ENCODE measurements at regions of chr2 and their contacts with region 1.

Region 1: DNA sequence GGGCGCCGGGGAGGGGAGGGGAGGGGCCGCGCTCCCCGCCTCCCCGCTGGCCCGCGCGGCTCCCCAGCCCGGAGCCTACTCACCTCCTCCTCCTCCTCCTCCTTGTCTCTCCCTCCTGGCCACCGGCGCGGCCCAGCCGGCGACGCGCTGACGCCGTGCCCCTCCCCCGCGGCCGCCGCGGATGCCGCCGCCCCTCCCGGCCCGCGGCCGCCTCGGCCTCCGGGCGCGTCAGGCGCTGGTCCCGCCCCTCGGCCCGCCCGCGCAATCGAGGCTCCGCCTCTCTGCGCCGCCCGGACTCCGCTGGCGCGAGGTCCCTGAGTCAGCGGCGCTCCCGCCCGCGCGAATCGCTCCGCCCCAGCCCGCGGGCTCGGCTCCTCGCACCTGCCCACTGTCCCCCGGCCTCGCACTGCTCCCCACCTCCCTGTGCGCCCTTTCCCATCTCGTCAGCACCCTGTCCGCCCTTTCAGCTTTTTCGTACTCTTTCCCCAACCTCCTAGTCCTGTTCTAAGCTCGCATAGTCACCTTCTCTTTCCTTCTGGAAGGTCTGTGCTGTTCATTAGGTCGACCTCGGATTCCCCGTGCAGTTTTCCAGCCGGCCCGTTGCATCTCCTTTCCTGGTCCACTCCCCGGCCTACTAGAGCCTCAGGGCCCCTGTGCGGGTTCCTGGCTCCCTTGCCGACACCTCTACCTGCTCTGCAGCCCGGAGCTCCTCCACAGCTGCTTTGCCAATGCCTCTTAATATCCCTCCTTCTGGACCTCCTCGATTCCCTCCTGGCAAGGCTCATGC is 187.4 kb downstream of the ZEB2 start:
- DNase-seq: peak; percentile 63 to 84
- ATAC-seq: peak; percentile 90 to 93
- H3K4me3 ChIP-seq: peak overlapping the region; percentile 76 to 98 (median 82)
- H3K27ac ChIP-seq: peak overlapping the region; percentile 83 to 94 (median 89)
- H3K4me1 ChIP-seq: peaks cover 12 to 17% of the 10 kb centered on the region in 2 donors
- H3K27me3 ChIP-seq: no peaks in the 10 kb centered on the region
- CTCF ChIP-seq: no peak
- POLR2A ChIP-seq: peak; percentile 52 to 66

Region 2: GRCh38 chr2:144267239-144267638 is 65.3 kb before region 1 on chr2:
- in situ Hi-C with region 1: no loop called
- intact Hi-C with region 1: no loop called
- DNase-seq: no peak
- ATAC-seq: no peak
- H3K4me3 ChIP-seq: no peak overlapping the region
- H3K27ac ChIP-seq: no peak overlapping the region
- H3K4me1 ChIP-seq: no peaks in the 10 kb centered on the region
- H3K27me3 ChIP-seq: no peaks in the 10 kb centered on the region
- CTCF ChIP-seq: no peak
- POLR2A ChIP-seq: no peak

Region 3: GRCh38 chr2:144364944-144365738 is 32.6 kb after region 1 on chr2:
- in situ Hi-C with region 1: no loop called
- intact Hi-C with region 1: no loop called
- DNase-seq: no peak
- ATAC-seq: no peak
- H3K4me3 ChIP-seq: no peak overlapping the region
- H3K27ac ChIP-seq: no peak overlapping the region
- H3K4me1 ChIP-seq: no peaks in the 10 kb centered on the region
- H3K27me3 ChIP-seq: no peaks in the 10 kb centered on the region
- CTCF ChIP-seq: no peak
- POLR2A ChIP-seq: no peak

Region 4: GRCh38 chr2:144390424-144391020 is 58.0 kb after region 1 on chr2:
- in situ Hi-C with region 1: loop called in 1 of 4 experiments (anchors 10 kb)
- intact Hi-C with region 1: no loop called
- DNase-seq: no peak
- ATAC-seq: no peak
- H3K4me3 ChIP-seq: no peak overlapping the region
- H3K27ac ChIP-seq: no peak overlapping the region
- H3K4me1 ChIP-seq: peaks cover 10 to 14% of the 10 kb centered on the region in 2 donors
- H3K27me3 ChIP-seq: no peaks in the 10 kb centered on the region
- CTCF ChIP-seq: no peak
- POLR2A ChIP-seq: no peak

Region 5: DNA sequence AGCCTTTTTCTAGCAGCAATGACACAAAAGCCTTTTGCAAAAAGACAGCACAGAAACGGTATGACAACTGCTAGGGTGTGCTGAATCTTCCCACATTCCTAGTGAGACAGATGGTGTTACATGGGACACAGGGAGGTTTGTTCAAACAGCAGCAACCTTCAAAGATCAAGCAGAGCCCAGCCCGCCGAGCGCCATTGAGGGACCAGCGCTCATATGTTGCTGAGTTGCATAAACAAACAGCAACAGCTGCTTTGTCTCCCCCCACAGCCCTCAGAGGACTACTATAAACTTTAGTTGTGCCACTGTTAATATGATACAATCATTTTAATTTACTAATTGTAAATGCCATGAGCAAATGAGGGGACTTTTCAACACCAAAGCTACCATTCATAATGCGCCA is 69.7 kb after region 1 on chr2:
- in situ Hi-C with region 1: loop called in 1 of 4 experiments (anchors 10 kb)
- intact Hi-C with region 1: loop called (anchors 5 kb)
- DNase-seq: no peak
- ATAC-seq: no peak
- H3K4me3 ChIP-seq: no peak overlapping the region
- H3K27ac ChIP-seq: peak overlapping the region in 1 of 4 donors; percentile 31
- H3K4me1 ChIP-seq: peaks cover 8 to 9% of the 10 kb centered on the region in 2 donors
- H3K27me3 ChIP-seq: no peaks in the 10 kb centered on the region
- CTCF ChIP-seq: no peak
- POLR2A ChIP-seq: no peak

Region 6: GRCh38 chr2:144456680-144457079 is 124.1 kb after region 1 on chr2:
- in situ Hi-C with region 1: no loop called
- intact Hi-C with region 1: loop called (anchors 5 kb)
- DNase-seq: peak; percentile 44 to 63
- ATAC-seq: peak; percentile 98 to 99
- H3K4me3 ChIP-seq: no peak overlapping the region
- H3K27ac ChIP-seq: no peak overlapping the region
- H3K4me1 ChIP-seq: peaks cover 25 to 40% of the 10 kb centered on the region in 2 donors
- H3K27me3 ChIP-seq: no peaks in the 10 kb centered on the region
- CTCF ChIP-seq: no peak
- POLR2A ChIP-seq: no peak

Region 7: GRCh38 chr2:144516981-144517865 is 184.7 kb after region 1 on chr2:
- in situ Hi-C with region 1: loop called in 3 of 4 experiments (anchors 5 to 25 kb)
- intact Hi-C with region 1: loop called (anchors 2 kb)
- DNase-seq: peak; percentile 65 to 68
- ATAC-seq: peak; percentile 64 to 76
- H3K4me3 ChIP-seq: peak overlapping the region; percentile 76 to 89 (median 78)
- H3K27ac ChIP-seq: peak overlapping the region; percentile 94 to 96 (median 95)
- H3K4me1 ChIP-seq: peaks cover 34 to 44% of the 10 kb centered on the region in 2 donors
- H3K27me3 ChIP-seq: peaks cover 0 to 13% (median 0%) of the 10 kb centered on the region in 3 donors
- CTCF ChIP-seq: no peak
- POLR2A ChIP-seq: peak; percentile 43 to 75

Region 8: GRCh38 chr2:144583741-144584453 is 251.3 kb after region 1 on chr2:
- in situ Hi-C with region 1: no loop called
- intact Hi-C with region 1: no loop called
- DNase-seq: no peak
- ATAC-seq: peak in 1 of 2 donors; percentile 39
- H3K4me3 ChIP-seq: no peak overlapping the region
- H3K27ac ChIP-seq: no peak overlapping the region
- H3K4me1 ChIP-seq: no peaks in the 10 kb centered on the region
- H3K27me3 ChIP-seq: no peaks in the 10 kb centered on the region
- CTCF ChIP-seq: no peak
- POLR2A ChIP-seq: no peak